Activated CD4-positive, alpha-beta T cell treated with anti-CD3 and anti-CD28 coated beads for 36 hours (primary cell): ENCODE measurements at regions of chr9 and their contacts with region 1.

Region 1: GRCh38 chr9:77800924-77801551 is 152.9 kb upstream of the GNA14 start:
- DNase-seq: no peak
- ATAC-seq: peak; percentile 77
- H3K4me3 Mint-ChIP-seq: no peak overlapping the region
- H3K27ac Mint-ChIP-seq: no peak overlapping the region
- H3K4me1 Mint-ChIP-seq: peaks cover 12% of the 10 kb centered on the region
- H3K27me3 Mint-ChIP-seq: no peaks in the 10 kb centered on the region

Region 2: GRCh38 chr9:77725820-77726219 is 75.2 kb before region 1 on chr9:
- CTCF ChIA-PET with region 1: no interaction called
- POLR2A ChIA-PET with region 1: no interaction called
- intact Hi-C with region 1: loop called in 1 of 2 experiments (anchors 2 kb)
- DNase-seq: peak; percentile 69
- ATAC-seq: peak; percentile 79
- H3K4me3 Mint-ChIP-seq: peak overlapping the region; percentile 22
- H3K27ac Mint-ChIP-seq: peak overlapping the region; percentile 90
- H3K4me1 Mint-ChIP-seq: peaks cover 63% of the 10 kb centered on the region
- H3K27me3 Mint-ChIP-seq: no peaks in the 10 kb centered on the region

Region 3: GRCh38 chr9:77738932-77739331 is 62.1 kb before region 1 on chr9:
- CTCF ChIA-PET with region 1: no interaction called
- POLR2A ChIA-PET with region 1: no interaction called
- intact Hi-C with region 1: no loop called
- DNase-seq: no peak
- ATAC-seq: peak; percentile 74
- H3K4me3 Mint-ChIP-seq: no peak overlapping the region
- H3K27ac Mint-ChIP-seq: peak overlapping the region; percentile 67
- H3K4me1 Mint-ChIP-seq: peaks cover 22% of the 10 kb centered on the region
- H3K27me3 Mint-ChIP-seq: no peaks in the 10 kb centered on the region

Region 4: DNA sequence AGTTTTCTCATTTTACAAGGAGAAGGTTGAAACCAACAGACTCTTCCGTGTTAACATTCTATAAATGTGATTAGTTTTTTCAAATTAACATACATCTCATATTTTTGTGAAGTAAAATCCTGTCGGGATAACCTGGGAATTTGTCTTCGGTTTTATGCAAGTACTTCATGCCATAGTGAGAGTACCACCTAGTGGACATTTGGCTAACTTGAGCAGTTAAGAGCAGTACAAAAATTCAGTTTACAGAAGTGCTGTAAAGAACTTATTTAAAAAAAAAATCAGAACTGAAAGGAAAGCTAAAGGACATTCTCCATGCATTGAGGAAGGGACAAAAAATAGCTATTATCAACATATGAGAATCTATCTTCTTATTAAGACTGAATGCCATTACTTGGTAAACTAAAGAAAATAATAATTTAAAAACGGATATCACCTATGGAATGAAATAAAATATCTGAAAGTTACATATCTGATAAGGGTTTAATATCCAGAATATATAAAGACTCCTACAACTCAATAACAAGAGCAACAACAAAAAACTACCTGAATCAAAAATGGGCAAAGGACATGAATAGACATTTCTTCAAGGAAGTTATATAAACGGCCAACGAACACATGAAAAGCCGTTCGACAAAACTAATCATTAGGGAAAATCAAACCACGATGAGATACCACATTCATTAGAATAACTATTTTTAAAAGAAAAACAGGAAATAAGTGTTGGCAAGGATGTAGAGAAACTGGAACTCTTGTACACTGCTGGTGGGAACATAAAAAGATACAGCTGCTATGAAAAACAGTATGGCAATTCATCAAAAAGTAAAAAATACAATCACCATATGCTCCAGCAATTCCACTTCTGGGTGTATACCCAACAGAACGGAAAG is 35.9 kb before region 1 on chr9:
- CTCF ChIA-PET with region 1: no interaction called
- POLR2A ChIA-PET with region 1: no interaction called
- intact Hi-C with region 1: loop called in 1 of 2 experiments (anchors 2 kb)
- DNase-seq: no peak
- ATAC-seq: no peak
- H3K4me3 Mint-ChIP-seq: no peak overlapping the region
- H3K27ac Mint-ChIP-seq: no peak overlapping the region
- H3K4me1 Mint-ChIP-seq: peaks cover 10% of the 10 kb centered on the region
- H3K27me3 Mint-ChIP-seq: no peaks in the 10 kb centered on the region